AG04450 (cell line): ENCODE measurements at regions of chr1 and their contacts with region 1.

Region 1: DNA sequence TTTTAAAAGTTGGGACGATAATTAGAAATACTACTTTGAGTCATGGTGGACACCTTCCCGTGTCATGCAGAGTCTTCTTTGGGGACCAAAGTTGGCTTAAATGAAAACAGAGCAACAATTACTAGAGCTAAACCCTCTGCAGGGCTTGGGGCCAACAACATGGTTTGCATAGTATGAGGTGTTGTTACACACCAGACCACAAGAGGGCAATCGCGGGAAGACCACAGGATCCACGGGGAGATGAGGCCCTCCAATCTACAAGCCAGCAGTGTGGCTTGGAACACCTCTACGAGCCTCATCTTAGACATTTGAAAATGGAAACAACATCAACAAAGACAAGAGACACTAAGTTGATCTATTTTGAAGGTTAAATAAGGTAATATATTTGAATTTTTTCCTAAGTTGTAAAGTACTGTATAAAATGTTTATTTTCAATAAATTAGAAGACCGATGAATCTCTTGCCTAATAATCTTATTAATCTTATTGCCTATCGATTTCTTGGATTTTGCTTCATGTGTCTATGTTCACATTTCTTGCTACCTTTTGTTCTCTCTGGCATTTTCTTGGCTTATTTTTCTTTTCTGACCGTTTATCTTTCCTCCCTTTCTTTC is 8.2 kb upstream of the SMCP start:
- DNase-seq: peak; percentile 4
- H3K4me3 ChIP-seq: no peak overlapping the region
- H3K27ac ChIP-seq: no peak overlapping the region
- H3K27me3 ChIP-seq: no peaks in the 10 kb centered on the region
- CTCF ChIP-seq: peak; percentile 83

Region 2: GRCh38 chr1:152926091-152926490 is 56.2 kb after region 1 on chr1:
- CTCF ChIA-PET with region 1: interaction called, 15 read pairs
- POLR2A ChIA-PET with region 1: no interaction called
- DNase-seq: no peak
- H3K4me3 ChIP-seq: no peak overlapping the region
- H3K27ac ChIP-seq: no peak overlapping the region
- H3K27me3 ChIP-seq: no peaks in the 10 kb centered on the region
- CTCF ChIP-seq: peak; percentile 33